Adrenal gland (tissue), 19 donors: ENCODE measurements at regions of chr14 and their contacts with region 1.

Region 1: DNA sequence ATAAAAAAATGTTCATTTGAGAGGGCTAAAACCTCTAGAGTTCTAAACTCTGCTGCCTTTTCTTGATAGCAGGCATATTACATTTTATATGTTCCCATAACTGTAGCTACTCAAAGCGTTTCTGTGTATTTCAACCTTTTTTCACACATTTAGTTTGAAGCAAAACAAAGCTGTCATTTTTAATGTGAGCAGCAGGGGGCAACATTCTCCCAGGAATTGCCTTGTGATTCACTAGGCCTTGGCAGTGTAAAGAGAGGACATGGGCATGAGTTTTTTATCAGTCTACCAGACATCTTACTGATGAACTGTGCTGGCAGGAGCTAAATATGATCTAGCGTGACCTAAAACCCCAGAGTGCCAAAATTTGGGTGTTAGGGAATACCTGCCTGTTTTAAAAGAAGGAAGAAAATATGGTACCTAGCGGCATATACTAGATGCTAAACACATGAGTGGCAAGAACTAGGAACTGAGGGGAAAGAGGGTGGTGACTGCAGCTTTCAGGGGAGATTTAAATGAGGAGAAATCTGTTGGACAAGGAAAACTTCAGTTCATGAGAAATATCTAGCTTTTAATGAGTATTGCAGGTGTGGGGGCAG is 65.3 kb downstream of the IFT43 start:
- DNase-seq: peak; percentile 49 to 81 (median 68)
- H3K4me3 ChIP-seq: no peak overlapping the region
- H3K27ac ChIP-seq: no peak overlapping the region
- H3K4me1 ChIP-seq: no peaks in the 10 kb centered on the region
- H3K27me3 ChIP-seq: no peaks in the 10 kb centered on the region
- CTCF ChIP-seq: peak; percentile 69 to 91 (median 84)
- POLR2A ChIP-seq: no peak

Region 2: GRCh38 chr14:76352639-76353281 is 301.9 kb after region 1 on chr14:
- intact Hi-C with region 1: loop called (anchors 2 to 5 kb)
- DNase-seq: peak; percentile 27 to 56 (median 48)
- H3K4me3 ChIP-seq: no peak overlapping the region
- H3K27ac ChIP-seq: no peak overlapping the region
- H3K4me1 ChIP-seq: peaks cover 0 to 6% of the 10 kb centered on the region in 2 donors
- H3K27me3 ChIP-seq: peaks cover 3% of the 10 kb centered on the region
- CTCF ChIP-seq: peak; percentile 57 to 84 (median 71)
- POLR2A ChIP-seq: no peak

Region 3: GRCh38 chr14:76647697-76648298 is 596.9 kb after region 1 on chr14:
- intact Hi-C with region 1: loop called in 1 of 2 experiments (anchors 10 kb)
- DNase-seq: peak; percentile 18 to 55 (median 38)
- H3K4me3 ChIP-seq: no peak overlapping the region
- H3K27ac ChIP-seq: no peak overlapping the region
- H3K4me1 ChIP-seq: no peaks in the 10 kb centered on the region
- H3K27me3 ChIP-seq: peaks cover 3% of the 10 kb centered on the region
- CTCF ChIP-seq: peak; percentile 51 to 72 (median 66)
- POLR2A ChIP-seq: no peak